Activated B cell treated with CpG ODN at 0.5 μM for 24 hours (primary cell): ENCODE measurements at regions of chr11 and their contacts with region 1.

Region 1: DNA sequence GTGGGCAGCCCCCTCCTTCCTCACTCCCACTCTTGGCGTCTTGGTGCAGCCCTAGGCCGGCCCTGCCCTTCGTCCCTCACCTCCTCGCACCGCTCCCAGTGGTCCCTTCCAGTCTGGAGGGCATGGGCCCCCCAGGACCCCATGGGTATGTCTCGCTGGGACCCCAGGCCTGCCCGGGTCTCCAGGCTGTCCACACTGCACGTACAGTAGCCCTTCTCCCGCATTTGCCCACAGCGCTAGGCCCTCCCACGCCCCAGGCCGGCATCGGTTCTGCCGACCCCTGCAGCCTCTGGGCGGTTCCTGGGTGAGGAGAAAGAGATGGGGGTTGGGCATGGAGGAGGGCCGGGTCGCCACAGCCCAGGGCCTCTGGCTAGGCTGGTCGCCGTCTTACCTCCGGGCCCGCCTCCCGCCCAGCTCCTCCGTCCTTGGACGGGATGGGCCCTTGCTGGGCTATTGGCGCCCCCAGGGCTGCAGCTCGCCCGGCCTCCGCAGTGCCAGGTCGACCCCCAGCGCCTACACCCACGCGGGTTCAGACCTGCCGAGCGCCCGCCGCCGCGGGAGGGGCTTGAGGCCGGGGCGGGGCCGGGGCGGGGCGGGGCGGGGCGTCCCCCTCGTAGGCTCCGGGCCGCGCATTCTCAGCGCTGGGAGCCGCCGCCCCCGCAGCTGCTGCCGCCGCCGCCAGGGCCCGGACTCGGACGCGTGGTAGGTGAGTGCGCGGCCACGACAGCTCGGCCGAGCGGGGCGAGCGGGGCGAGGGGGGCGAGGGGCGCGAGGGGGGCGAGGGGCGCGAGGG is at the start of gene CD151:
- DNase-seq: peak; percentile 65
- ATAC-seq: peak; percentile 64
- H3K4me3 Mint-ChIP-seq: peak within 1 kb of the TSS; percentile 64
- H3K27ac Mint-ChIP-seq: no peak within 1 kb of the TSS
- H3K4me1 Mint-ChIP-seq: peaks cover 45% of the 10 kb centered on the region
- H3K27me3 Mint-ChIP-seq: peaks cover 5% of the 10 kb centered on the region
- CTCF ChIP-seq: no peak
- total RNA-seq, gene CD151: 14.4 and 14.5 TPM in 2 replicates

Region 2: GRCh38 chr11:606257-606656 is 226.3 kb before region 1 on chr11:
- CTCF ChIA-PET with region 1: no interaction called
- POLR2A ChIA-PET with region 1: no interaction called
- intact Hi-C with region 1: no loop called
- DNase-seq: no peak
- ATAC-seq: no peak
- H3K4me3 Mint-ChIP-seq: no peak overlapping the region
- H3K27ac Mint-ChIP-seq: no peak overlapping the region
- H3K4me1 Mint-ChIP-seq: no peaks in the 10 kb centered on the region
- H3K27me3 Mint-ChIP-seq: no peaks in the 10 kb centered on the region
- CTCF ChIP-seq: no peak

Region 3: GRCh38 chr11:636452-637235 is 195.9 kb before region 1 on chr11:
- CTCF ChIA-PET with region 1: no interaction called
- POLR2A ChIA-PET with region 1: no interaction called
- intact Hi-C with region 1: no loop called
- DNase-seq: no peak
- ATAC-seq: no peak
- H3K4me3 Mint-ChIP-seq: no peak overlapping the region
- H3K27ac Mint-ChIP-seq: no peak overlapping the region
- H3K4me1 Mint-ChIP-seq: peaks cover 24% of the 10 kb centered on the region
- H3K27me3 Mint-ChIP-seq: peaks cover 23% of the 10 kb centered on the region
- CTCF ChIP-seq: no peak

Region 4: DNA sequence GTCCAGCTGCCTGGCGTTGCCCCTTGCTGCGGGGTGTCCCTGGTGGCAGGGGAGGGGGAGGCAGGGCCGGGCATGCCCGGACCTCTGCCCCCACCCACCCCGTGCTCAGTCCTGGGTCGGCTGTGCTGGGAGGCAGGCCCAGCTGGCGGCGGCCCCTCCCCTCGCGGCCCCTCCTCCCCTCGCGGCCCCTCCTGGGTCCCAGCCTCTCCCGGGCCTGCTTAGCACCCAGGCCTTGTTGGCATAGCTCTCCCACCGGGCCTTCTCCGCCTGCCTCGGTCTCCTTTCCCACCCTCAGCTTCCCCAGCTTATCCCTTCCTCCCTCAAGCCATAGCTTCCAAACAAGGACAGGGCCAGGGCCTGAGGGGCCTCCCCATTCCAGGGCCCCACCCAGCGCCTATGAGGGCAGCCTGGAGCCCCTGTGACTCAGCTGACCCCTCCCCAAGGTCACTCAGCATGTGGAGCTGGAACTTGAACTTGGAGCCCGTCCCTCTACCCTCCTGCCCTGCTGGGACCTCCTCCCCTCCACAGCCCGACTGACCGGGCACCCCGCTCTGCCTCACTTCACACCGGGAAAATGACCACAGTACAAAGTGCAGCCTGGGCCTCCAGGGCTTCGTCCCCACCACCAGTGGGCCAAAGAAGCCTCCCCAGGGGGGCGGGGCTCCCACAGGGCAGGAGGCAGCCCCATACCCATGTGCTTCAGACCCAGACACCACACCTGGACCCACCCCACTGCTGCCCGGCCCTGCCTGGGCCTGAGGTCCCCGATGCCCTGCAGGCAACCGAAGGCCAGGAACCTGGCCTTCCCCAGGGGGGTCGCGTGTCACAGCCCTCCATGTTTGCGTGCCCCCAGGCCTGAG is 125.3 kb before region 1 on chr11:
- CTCF ChIA-PET with region 1: no interaction called
- POLR2A ChIA-PET with region 1: no interaction called
- intact Hi-C with region 1: no loop called
- DNase-seq: no peak
- ATAC-seq: no peak
- H3K4me3 Mint-ChIP-seq: no peak overlapping the region
- H3K27ac Mint-ChIP-seq: no peak overlapping the region
- H3K4me1 Mint-ChIP-seq: peaks cover 16% of the 10 kb centered on the region
- H3K27me3 Mint-ChIP-seq: peaks cover 19% of the 10 kb centered on the region
- CTCF ChIP-seq: no peak

Region 5: DNA sequence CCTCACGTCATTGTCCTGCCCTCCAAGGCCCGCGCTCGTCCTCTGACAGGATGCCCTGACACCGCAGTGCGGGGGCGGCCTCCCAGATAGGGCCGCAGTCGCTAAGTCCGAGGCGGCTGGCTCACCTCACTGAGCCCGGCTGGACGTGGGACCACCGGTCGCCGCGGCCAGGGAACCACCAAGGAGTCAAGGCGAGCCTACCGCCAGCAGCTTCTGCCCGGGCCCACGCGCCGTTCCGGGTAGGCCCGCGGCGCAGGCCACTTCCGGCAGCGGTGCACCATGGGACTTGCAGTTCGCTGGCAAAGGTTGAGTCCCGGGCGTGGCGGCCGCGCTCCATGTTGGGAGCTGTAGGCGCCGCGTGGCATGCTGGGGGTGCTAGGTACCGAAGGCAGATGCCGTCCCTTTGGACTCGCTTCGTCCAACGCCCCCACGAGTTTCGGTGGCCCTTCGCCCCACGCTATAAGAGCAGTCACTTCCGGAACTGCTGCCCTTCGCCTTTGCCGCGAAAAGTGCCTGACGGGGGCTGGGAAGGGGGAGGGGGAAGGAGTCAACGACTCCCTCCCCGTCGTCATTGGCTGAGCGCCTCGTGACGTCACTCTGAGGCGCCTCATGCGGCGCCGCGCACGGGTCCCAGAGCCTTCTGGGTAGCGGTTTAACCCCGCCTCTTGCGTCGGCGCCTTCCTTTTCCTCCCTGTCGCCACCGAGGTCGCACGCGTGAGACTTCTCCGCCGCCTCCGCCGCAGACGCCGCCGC is 23.1 kb before region 1 on chr11 and contains the start of gene RPLP2:
- CTCF ChIA-PET with region 1: no interaction called
- POLR2A ChIA-PET with region 1: interaction called, 6 read pairs
- intact Hi-C with region 1: loop called (anchors 1 kb)
- DNase-seq: peak; percentile 97
- ATAC-seq: peak; percentile 82
- H3K4me3 Mint-ChIP-seq: peak within 1 kb of the TSS; percentile 91
- H3K27ac Mint-ChIP-seq: peak within 1 kb of the TSS; percentile 98
- H3K4me1 Mint-ChIP-seq: peaks cover 37% of the 10 kb centered on the region
- H3K27me3 Mint-ChIP-seq: no peaks in the 10 kb centered on the region
- CTCF ChIP-seq: no peak
- total RNA-seq, gene RPLP2: 4,124 and 4,449 TPM in 2 replicates

Region 6: DNA sequence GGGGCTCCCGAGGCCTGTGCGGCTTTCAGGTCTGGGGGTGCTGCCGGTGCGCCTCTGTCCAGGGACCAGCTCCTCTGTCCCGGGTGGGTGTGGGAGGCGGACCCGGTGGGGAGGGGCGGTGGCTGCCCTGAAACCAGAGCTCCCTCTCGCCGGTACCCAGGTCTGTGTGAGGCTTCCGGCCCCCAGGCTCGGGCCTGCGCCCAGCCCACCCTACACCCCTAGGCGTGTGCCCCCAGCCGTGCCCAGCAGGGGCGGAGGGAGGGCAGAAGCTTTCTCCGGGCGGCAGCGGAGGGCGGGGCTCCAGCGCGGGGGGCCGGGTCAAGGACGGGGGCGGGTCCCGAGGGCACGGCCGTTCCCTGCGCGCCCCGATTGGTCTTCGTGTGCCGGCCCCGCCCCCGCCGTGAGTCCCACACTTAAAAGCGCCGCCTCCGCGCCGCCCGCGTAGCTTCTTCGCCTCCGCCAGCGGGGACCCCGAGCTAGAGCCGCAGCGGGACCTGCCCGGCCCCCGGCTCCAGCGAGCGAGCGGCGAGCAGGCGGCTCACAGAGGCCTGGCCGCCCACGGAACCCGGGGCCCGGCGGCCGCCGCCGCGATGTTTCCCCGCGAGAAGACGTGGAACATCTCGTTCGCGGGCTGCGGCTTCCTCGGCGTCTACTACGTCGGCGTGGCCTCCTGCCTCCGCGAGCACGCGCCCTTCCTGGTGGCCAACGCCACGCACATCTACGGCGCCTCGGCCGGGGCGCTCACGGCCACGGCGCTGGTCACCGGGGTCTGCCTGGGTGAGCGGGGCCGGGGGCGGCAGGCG is 13.2 kb before region 1 on chr11:
- CTCF ChIA-PET with region 1: no interaction called
- POLR2A ChIA-PET with region 1: interaction called, 104 read pairs
- intact Hi-C with region 1: loop called (anchors 1 kb)
- DNase-seq: peak; percentile 95
- ATAC-seq: peak; percentile 85
- H3K4me3 Mint-ChIP-seq: peak overlapping the region; percentile 85
- H3K27ac Mint-ChIP-seq: no peak overlapping the region
- H3K4me1 Mint-ChIP-seq: peaks cover 14% of the 10 kb centered on the region
- H3K27me3 Mint-ChIP-seq: no peaks in the 10 kb centered on the region
- CTCF ChIP-seq: no peak